Left lung (tissue), 14 donors: ENCODE measurements at regions of chr20 and their contacts with region 1.

Region 1: DNA sequence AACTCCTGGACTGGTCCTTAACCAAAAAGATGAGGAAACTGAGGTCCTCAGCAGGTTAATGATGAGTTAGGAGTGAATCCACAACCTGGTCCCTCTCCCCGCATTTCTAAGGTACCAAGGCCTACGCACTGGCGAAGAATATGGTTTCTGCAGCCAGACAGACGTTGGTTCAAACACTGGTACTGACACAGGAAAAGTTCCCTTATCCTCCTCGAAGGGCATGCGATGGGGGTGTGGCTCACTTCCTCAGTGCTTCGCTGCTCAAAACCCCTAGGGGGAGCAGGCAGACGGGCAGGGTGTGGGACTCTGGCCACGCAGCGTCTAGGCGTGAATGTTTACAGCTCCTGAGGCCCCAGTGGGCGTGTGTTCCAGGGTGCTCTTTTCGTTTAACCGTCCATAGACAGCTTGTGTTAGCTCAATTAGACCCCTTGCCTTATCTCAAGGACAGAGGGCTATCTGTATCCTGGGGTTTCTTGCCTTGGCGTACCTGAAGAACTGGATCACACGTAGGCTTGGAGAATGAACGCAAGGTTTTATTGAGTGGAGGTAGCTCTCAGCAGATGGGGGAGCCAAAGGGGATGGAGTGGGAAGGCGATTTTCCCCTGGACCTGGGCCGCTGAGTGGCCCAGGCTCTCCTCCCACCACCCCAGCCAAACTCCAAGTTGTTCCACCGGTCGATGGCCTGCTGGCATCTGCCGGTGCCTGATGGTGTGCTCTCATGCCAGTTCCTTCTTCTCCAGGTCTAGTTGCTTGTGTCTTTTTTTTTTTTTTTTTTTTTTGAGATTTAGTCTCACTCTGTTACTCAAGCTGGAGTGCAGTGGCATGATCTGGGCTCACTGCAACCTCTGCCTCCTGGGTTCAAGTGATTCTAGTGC is 31.8 kb upstream of the PTPN1 start:
- DNase-seq: peak in 2 of 4 donors; percentile 80 to 88
- ATAC-seq: peak; percentile 93
- H3K4me3 ChIP-seq: no peak overlapping the region
- H3K27ac ChIP-seq: no peak overlapping the region
- H3K4me1 ChIP-seq: peaks cover 3 to 31% of the 10 kb centered on the region in 2 donors
- H3K27me3 ChIP-seq: no peaks in the 10 kb centered on the region
- CTCF ChIP-seq: peak; percentile 37 to 73

Region 2: DNA sequence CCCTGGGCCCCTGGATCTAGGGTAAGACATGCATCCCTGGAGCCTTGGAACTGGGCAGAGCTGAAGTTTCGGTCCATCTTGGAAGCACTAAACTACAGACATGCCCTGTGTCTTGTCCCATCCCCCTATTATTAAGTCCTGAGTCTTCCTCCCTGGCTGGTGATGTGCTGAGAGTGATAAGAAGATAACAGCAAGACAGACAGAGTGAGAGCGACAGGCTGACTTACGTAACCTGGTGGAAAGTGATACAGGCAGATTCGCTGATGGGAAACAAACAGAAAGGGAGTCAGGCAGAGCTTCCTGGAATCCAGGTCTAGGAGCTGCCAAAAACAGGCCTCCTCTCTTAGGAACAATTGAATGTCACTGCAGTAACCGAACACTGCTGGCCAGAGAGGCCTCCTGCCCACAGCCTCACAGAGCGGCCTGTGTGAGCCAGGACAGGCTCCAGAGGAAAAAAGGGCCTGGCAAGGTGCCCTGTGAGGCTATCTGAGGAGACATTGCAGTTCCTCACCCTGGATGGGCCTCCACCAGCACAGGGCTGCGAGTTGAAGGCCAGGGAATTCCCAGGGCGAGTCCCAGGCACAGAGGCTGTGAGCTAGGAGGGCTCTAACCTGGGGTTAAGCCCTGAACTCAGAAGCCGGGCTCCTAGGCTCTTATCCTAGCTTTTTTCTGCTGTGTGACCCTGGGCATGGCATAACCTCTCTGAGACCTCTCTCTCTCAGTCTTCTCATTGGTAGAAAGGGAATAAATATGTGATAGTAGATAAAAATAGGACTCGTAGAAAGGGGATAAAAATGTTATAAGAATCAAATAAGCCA is 730.5 kb before region 1 on chr20:
- intact Hi-C with region 1: no loop called
- DNase-seq: peak; percentile 36 to 67 (median 56)
- ATAC-seq: peak; percentile 71
- H3K4me3 ChIP-seq: no peak overlapping the region
- H3K27ac ChIP-seq: peak overlapping the region; percentile 55 to 65
- H3K4me1 ChIP-seq: peaks cover 0 to 33% of the 10 kb centered on the region in 2 donors
- H3K27me3 ChIP-seq: no peaks in the 10 kb centered on the region
- CTCF ChIP-seq: no peak

Region 3: DNA sequence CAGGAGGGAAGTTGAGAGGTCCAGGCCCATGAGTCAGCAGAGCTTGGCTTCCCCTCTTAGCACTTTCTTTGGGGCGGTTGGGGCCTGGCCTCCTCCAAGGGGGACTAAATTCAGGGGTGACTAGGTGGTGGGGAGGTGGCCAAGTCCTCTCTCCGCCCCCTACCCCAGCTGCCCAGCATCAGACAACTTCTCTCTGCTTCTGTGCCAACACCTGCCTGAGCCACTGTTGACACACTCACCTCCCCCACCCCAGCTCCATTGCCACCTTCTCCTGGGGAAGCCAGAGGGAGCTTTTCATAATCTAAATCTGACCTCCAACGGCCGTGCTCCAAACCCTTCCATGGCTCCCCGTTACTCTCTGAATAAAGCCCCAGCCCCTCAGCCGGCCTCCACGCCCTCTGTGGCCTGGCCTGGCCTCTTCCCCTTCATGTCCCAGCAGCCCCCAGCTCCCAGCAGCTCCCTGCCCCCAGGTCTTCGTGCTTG is 217.6 kb before region 1 on chr20:
- intact Hi-C with region 1: no loop called
- DNase-seq: no peak
- ATAC-seq: peak; percentile 72
- H3K4me3 ChIP-seq: no peak overlapping the region
- H3K27ac ChIP-seq: peak overlapping the region; percentile 71 to 86
- H3K4me1 ChIP-seq: peaks cover 8 to 44% of the 10 kb centered on the region in 2 donors
- H3K27me3 ChIP-seq: no peaks in the 10 kb centered on the region
- CTCF ChIP-seq: no peak

Region 4: DNA sequence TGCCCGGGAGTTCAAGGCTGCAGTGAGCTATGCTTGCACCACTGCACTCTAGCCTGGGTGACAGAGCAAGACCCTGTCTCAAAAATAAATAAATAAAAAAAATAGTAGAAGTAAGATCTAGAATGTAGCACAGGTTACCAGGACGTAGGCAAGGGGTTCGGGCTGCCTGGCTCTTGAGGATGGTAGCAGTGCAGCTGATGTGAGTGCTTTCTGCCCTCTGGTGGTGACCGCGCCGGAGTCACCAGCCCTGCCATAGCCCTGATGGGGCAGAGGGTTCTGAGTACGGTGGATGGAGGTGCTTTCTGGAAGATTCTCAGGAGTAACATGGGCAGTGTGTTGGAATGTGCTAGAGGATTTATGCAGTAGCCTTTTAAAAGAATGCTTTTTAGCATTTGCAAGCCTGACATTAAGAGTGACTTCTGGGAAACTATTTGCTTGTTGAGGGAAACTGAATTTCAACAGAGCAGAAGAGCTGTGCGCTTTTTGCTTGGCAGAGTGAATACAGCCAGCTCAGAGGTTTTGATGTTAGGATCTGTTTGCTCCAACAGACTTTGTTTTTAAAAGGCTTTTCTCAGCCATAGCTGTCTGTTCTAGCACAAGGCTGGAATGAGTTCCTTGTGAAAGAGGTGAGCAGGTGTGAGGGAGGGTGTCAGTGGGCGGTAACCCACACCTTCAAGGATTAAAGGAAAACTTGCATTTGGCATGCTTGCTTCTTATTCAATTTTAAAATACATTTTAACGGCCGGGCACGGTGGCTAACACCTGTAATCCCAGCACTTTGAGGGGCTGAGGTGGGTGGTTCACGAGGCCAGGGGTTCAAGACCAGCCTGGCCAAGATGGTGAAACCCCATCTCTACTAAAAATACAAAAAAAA is 97.7 kb after region 1 on chr20:
- intact Hi-C with region 1: loop called in 1 of 2 experiments (anchors 5 kb)
- DNase-seq: peak; percentile 52 to 88 (median 78)
- ATAC-seq: peak; percentile 79
- H3K4me3 ChIP-seq: no peak overlapping the region
- H3K27ac ChIP-seq: no peak overlapping the region
- H3K4me1 ChIP-seq: peaks cover 8 to 45% of the 10 kb centered on the region in 2 donors
- H3K27me3 ChIP-seq: no peaks in the 10 kb centered on the region
- CTCF ChIP-seq: peak; percentile 75 to 84